BJ (cell line): ENCODE measurements at regions of chr3 and their contacts with region 1.

Region 1: GRCh38 chr3:139302084-139302800 is 41.6 kb upstream of the MRPS22 start:
- DNase-seq: peak; percentile 99
- H3K4me3 ChIP-seq: no peak overlapping the region
- H3K27me3 ChIP-seq: no peaks in the 10 kb centered on the region
- CTCF ChIP-seq: no peak

Region 2: GRCh38 chr3:139288266-139288821 is 13.9 kb before region 1 on chr3:
- CTCF ChIA-PET with region 1: interaction called, 11 read pairs
- POLR2A ChIA-PET with region 1: interaction called, 5 read pairs
- DNase-seq: no peak
- H3K4me3 ChIP-seq: no peak overlapping the region
- H3K27me3 ChIP-seq: no peaks in the 10 kb centered on the region
- CTCF ChIP-seq: peak; percentile 40